CD4-positive, alpha-beta memory T cell (primary cell): ENCODE measurements at regions of chr20 and their contacts with region 1.

Region 1: DNA sequence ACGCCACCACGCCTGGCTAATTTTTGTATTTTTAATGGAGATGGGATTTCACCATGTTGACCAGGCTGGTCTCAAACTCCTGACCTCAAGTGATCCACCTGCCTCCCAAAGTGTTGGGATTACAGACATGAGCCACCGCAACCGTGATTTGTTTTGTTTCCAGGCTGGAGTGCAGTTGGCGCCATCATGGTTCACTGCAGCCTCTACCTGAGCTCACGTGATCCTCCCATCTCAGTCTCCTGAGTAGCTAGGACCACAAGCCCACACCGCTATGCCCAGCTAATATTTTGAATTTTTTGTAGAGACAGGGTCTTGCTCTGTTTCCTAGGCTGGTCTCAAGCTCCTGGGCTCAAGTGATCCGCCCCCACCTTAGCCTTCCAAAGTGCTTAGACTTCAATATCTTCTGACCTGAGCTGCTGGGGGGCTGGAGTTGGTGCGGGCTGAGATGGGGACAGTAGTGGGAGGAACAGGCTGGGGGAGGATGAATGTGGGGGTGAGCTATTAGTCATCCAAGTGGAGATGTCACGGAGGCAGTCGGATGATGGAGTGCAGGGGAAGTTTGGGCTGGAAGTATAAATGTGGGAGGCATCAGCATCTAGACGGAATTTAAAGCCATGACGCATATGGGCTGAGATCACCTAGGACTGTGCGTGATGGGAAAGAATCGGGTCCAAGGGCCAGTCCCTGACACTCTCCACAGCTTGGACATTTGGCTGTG is 23.1 kb upstream of the ZMYND8 start:
- DNase-seq: no peak
- H3K4me3 ChIP-seq: no peak overlapping the region
- H3K4me3 Mint-ChIP-seq: no peak overlapping the region
- H3K27ac ChIP-seq: no peak overlapping the region
- H3K27ac Mint-ChIP-seq: peak overlapping the region in 2 of 7 donors; percentile 26 to 79
- H3K4me1 ChIP-seq: peaks cover 8% of the 10 kb centered on the region
- H3K4me1 Mint-ChIP-seq: peaks cover 4 to 16% (median 11%) of the 10 kb centered on the region in 4 donors
- H3K27me3 ChIP-seq: no peaks in the 10 kb centered on the region
- H3K27me3 Mint-ChIP-seq: peaks cover 0 to 2% of the 10 kb centered on the region in 2 donors

Region 2: DNA sequence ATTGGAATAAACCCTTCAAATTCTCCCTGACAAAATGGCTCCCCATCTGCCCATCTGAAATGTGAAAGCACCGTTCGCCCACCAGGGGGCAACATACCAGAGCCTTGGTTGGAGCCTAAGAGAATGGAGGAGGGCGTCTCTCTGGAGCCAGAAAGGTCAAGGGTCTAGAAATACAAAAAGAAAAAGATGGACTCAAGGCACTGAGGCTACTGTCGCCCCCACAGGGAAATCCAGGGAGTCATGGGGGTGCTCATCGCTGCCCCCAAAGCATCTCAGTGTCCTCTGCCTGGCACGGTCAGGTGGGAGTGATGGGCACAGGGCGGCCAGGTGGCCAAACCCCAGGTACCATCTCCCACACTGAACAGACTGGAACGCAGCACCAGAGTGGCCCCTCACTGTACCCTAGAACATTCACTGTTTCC is 159.4 kb before region 1 on chr20:
- CTCF ChIA-PET with region 1: interaction called, 29 read pairs
- POLR2A ChIA-PET with region 1: no interaction called
- intact Hi-C with region 1: loop called (anchors 1 kb)
- DNase-seq: peak in 4 of 5 donors; percentile 17 to 36 (median 26)
- H3K4me3 ChIP-seq: no peak overlapping the region
- H3K4me3 Mint-ChIP-seq: no peak overlapping the region
- H3K27ac ChIP-seq: no peak overlapping the region
- H3K27ac Mint-ChIP-seq: peak overlapping the region in 3 of 7 donors; percentile 7 to 70 (median 22)
- H3K4me1 ChIP-seq: no peaks in the 10 kb centered on the region
- H3K4me1 Mint-ChIP-seq: peaks cover 0 to 5% (median 3%) of the 10 kb centered on the region in 4 donors
- H3K27me3 ChIP-seq: no peaks in the 10 kb centered on the region
- H3K27me3 Mint-ChIP-seq: no peaks in the 10 kb centered on the region

Region 3: DNA sequence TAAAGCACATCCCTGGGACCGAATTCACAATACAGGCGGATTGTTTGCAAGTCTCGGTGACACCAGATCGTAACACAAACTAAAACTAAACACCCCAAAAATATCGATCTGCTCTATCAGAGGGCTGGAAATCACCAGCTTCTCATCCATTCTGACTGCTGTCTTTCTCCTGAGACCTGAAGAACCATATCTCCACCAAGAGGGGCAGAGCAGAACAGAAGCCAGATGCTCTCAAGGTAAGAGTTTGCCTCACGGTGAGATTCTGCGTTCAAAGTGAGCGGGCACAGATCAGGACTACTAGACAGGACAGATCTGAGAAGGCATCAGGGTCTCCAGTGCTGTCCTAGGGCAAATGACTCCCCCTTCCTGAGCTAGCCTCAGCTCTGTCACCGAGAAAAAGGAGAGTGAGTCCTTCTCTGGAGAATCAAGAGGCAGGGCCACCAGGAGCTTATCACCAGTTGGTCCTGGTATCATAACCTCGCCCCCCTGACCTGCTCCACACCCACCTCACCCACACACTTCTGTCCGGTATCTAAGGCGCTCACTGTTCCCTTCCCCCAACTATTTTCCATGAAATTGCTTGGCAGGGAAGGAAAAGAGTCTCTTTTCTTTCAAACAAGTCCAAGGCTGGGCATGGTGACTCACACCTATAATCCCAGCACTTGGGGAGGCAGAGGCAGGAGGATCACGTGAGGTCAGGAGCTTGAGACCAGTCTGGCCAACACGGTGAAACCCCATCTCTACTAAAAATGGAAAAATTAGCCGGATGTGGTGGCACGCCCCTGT is 100.8 kb before region 1 on chr20:
- CTCF ChIA-PET with region 1: interaction called, 646 read pairs
- POLR2A ChIA-PET with region 1: interaction called, 47 read pairs
- intact Hi-C with region 1: loop called (anchors 1 kb)
- DNase-seq: no peak
- H3K4me3 ChIP-seq: no peak overlapping the region
- H3K4me3 Mint-ChIP-seq: no peak overlapping the region
- H3K27ac ChIP-seq: no peak overlapping the region
- H3K27ac Mint-ChIP-seq: peak overlapping the region in 3 of 7 donors; percentile 48 to 52 (median 49)
- H3K4me1 ChIP-seq: no peaks in the 10 kb centered on the region
- H3K4me1 Mint-ChIP-seq: peaks cover 7 to 11% (median 9%) of the 10 kb centered on the region in 4 donors
- H3K27me3 ChIP-seq: no peaks in the 10 kb centered on the region
- H3K27me3 Mint-ChIP-seq: no peaks in the 10 kb centered on the region

Region 4: DNA sequence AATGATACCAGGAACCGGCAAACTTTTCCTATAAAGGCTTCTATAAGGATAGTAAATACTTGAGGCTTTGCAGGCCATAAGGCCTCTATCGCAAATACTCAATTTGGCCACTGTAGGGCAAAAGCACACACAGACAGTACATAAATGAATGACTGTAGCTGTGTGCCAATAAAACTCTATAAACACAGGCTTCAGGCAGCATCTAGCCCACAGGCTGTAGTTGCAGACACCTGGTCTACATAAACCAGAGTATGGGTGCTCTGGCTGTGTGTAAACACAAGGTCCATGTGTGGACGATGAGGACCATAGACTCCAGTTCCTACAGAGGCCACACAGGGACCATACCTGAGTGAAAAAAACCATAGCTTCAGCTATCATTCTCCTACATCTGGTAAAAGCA is 75.3 kb before region 1 on chr20:
- CTCF ChIA-PET with region 1: interaction called, 29 read pairs
- POLR2A ChIA-PET with region 1: no interaction called
- intact Hi-C with region 1: no loop called
- DNase-seq: no peak
- H3K4me3 ChIP-seq: no peak overlapping the region
- H3K4me3 Mint-ChIP-seq: no peak overlapping the region
- H3K27ac ChIP-seq: no peak overlapping the region
- H3K27ac Mint-ChIP-seq: peak overlapping the region in 3 of 7 donors; percentile 23 to 42 (median 27)
- H3K4me1 ChIP-seq: peaks cover 4% of the 10 kb centered on the region
- H3K4me1 Mint-ChIP-seq: peaks cover 6 to 10% (median 9%) of the 10 kb centered on the region in 4 donors
- H3K27me3 ChIP-seq: no peaks in the 10 kb centered on the region
- H3K27me3 Mint-ChIP-seq: no peaks in the 10 kb centered on the region

Region 5: DNA sequence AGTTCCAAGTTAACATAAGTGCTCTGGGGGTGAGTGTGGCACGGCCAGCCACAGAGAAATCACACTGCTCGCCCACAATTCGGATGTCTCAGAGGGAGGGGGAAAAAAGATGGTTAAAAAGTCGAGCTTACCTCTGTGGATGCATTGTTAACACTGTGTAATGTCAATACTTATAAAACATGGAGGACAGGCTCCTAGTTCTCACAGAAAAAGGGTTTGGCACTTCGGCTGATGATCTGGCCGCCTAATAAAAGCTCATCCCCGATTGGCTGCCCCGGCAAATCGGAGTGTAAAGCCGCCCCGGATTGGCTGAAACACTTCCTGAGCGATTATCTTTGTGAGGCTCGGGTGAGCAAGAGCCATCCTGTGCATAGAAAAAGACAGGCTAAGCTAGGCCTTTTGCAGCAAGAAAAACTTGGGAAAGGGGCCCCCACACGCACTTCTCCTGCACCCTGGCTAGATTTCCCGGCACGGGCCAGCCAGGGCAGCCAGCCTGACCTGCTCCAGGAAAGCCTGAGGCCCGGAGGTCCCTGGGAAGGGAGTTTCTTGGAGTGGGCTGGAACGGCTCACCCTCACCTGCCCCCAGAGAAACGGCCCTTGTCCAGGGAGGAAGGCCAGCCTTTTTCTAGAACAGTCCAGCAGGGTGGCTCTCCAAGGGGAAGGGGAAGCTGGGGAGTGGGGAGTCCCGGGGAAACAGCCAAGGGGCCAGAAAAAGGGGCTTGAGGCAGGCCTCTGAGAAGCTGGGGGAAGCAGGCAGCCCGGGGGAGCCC is 22.9 kb before region 1 on chr20 and contains the start of gene ZMYND8:
- CTCF ChIA-PET with region 1: interaction called, 125 read pairs
- POLR2A ChIA-PET with region 1: interaction called, 9 read pairs
- intact Hi-C with region 1: no loop called
- DNase-seq: peak; percentile 92 to 100 (median 97)
- H3K4me3 ChIP-seq: peak within 1 kb of the TSS; percentile 39 to 59
- H3K4me3 Mint-ChIP-seq: peak within 1 kb of the TSS; percentile 91 to 98 (median 96)
- H3K27ac ChIP-seq: peak within 1 kb of the TSS; percentile 76
- H3K27ac Mint-ChIP-seq: peak within 1 kb of the TSS; percentile 92 to 100 (median 99)
- H3K4me1 ChIP-seq: peaks cover 70% of the 10 kb centered on the region
- H3K4me1 Mint-ChIP-seq: peaks cover 13 to 55% (median 30%) of the 10 kb centered on the region in 4 donors
- H3K27me3 ChIP-seq: no peaks in the 10 kb centered on the region
- H3K27me3 Mint-ChIP-seq: no peaks in the 10 kb centered on the region
- total RNA-seq, gene ZMYND8: 47.7 to 48.5 TPM

Region 6: GRCh38 chr20:47501483-47502270 is 122.1 kb after region 1 on chr20 and contains the start of gene NCOA3:
- CTCF ChIA-PET with region 1: interaction called, 11 read pairs
- POLR2A ChIA-PET with region 1: interaction called, 4 read pairs
- intact Hi-C with region 1: no loop called
- DNase-seq: peak; percentile 83 to 90 (median 86)
- H3K4me3 ChIP-seq: peak within 1 kb of the TSS; percentile 68 to 70
- H3K4me3 Mint-ChIP-seq: peak within 1 kb of the TSS; percentile 90 to 99 (median 96)
- H3K27ac ChIP-seq: peak within 1 kb of the TSS; percentile 75
- H3K27ac Mint-ChIP-seq: peak within 1 kb of the TSS; percentile 91 to 97 (median 95)
- H3K4me1 ChIP-seq: peaks cover 39% of the 10 kb centered on the region
- H3K4me1 Mint-ChIP-seq: peaks cover 28 to 57% (median 39%) of the 10 kb centered on the region in 4 donors
- H3K27me3 ChIP-seq: no peaks in the 10 kb centered on the region
- H3K27me3 Mint-ChIP-seq: no peaks in the 10 kb centered on the region
- total RNA-seq, gene NCOA3: 69.0 to 74.7 TPM

Region 7: DNA sequence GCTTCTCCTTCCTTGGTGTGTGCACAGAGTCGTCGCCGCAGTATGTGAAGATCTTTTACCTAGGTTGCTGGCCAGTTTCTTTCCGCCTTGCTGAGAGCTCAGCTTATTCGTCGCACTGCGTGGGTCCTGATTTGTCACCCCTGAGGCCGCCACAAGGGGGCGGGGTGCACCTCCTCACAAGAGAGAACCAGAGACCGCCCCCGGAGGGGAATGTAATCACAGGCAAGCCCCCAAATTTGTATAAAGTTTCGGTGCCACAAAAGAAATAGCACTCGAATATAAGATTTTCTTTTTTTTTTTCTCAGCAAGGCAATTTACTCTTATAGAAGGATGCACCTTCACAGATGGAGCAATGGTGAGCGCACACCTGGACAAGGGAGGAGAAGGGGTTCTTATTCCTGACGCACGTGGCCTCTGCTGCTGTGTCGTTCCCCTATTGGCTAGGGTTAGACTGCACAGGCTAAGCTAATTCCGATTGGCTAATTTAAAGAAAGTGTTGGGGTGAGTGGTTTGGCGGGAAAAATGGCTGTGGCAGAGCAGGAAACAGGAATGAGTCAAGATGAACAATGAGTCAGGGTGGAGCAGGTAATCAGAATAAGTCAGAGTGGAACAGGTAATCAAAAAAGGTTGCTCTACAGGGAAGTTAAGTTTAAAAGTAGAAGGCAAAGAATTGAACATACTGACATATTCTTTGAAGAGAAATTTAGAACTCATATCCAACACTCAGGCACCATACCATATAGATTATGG is 141.6 kb after region 1 on chr20:
- CTCF ChIA-PET with region 1: no interaction called
- POLR2A ChIA-PET with region 1: no interaction called
- intact Hi-C with region 1: no loop called
- DNase-seq: no peak
- H3K4me3 ChIP-seq: no peak overlapping the region
- H3K4me3 Mint-ChIP-seq: peak overlapping the region in 1 of 8 donors; percentile 23
- H3K27ac ChIP-seq: no peak overlapping the region
- H3K27ac Mint-ChIP-seq: peak overlapping the region in 3 of 7 donors; percentile 6 to 24 (median 7)
- H3K4me1 ChIP-seq: peaks cover 13% of the 10 kb centered on the region
- H3K4me1 Mint-ChIP-seq: peaks cover 13 to 38% (median 24%) of the 10 kb centered on the region in 4 donors
- H3K27me3 ChIP-seq: no peaks in the 10 kb centered on the region
- H3K27me3 Mint-ChIP-seq: no peaks in the 10 kb centered on the region

Region 8: GRCh38 chr20:47934807-47935206 is 555.2 kb after region 1 on chr20:
- CTCF ChIA-PET with region 1: no interaction called
- POLR2A ChIA-PET with region 1: no interaction called
- intact Hi-C with region 1: no loop called
- DNase-seq: no peak
- H3K4me3 ChIP-seq: no peak overlapping the region
- H3K4me3 Mint-ChIP-seq: no peak overlapping the region
- H3K27ac ChIP-seq: no peak overlapping the region
- H3K27ac Mint-ChIP-seq: no peak overlapping the region
- H3K4me1 ChIP-seq: no peaks in the 10 kb centered on the region
- H3K4me1 Mint-ChIP-seq: no peaks in the 10 kb centered on the region
- H3K27me3 ChIP-seq: no peaks in the 10 kb centered on the region
- H3K27me3 Mint-ChIP-seq: peaks cover 15% of the 10 kb centered on the region in 2 donors